Common myeloid progenitor, CD34-positive (primary cell): ENCODE measurements at regions of chr17 and their contacts with region 1.

Region 1: GRCh38 chr17:49971848-49972485 is 3.0 kb downstream of the DLX4 start:
- DNase-seq: no peak
- H3K4me3 ChIP-seq: peak overlapping the region in 3 of 7 experiments; percentile 22 to 31 (median 26)
- H3K27ac ChIP-seq: no peak overlapping the region
- H3K4me1 ChIP-seq: peaks cover 2 to 42% (median 35%) of the 10 kb centered on the region in 4 experiments
- H3K27me3 ChIP-seq: peaks cover 13 to 98% (median 63%) of the 10 kb centered on the region in 5 experiments

Region 2: GRCh38 chr17:49987681-49988441 is 15.9 kb after region 1 on chr17:
- CTCF ChIA-PET with region 1: interaction called, 25 read pairs
- POLR2A ChIA-PET with region 1: no interaction called
- DNase-seq: peak in 1 of 3 donors; percentile 52
- H3K4me3 ChIP-seq: no peak overlapping the region
- H3K27ac ChIP-seq: no peak overlapping the region
- H3K4me1 ChIP-seq: peaks cover 0 to 21% (median 13%) of the 10 kb centered on the region in 4 experiments
- H3K27me3 ChIP-seq: peaks cover 0 to 79% (median 28%) of the 10 kb centered on the region in 5 experiments